Activated CD4-positive, alpha-beta T cell treated with anti-CD3 and anti-CD28 coated beads, Interleukin-2, amount 10 ng/mL, durations not matched to agents 24 days and 14 days (primary cell): ENCODE measurements at regions of chr14 and their contacts with region 1.

Region 1: GRCh38 chr14:91060351-91061055 is at the start of gene RPS6KA5:
- DNase-seq: peak; percentile 100
- H3K4me3 Mint-ChIP-seq: peak within 1 kb of the TSS; percentile 85
- H3K27ac Mint-ChIP-seq: peak within 1 kb of the TSS; percentile 76
- H3K4me1 Mint-ChIP-seq: peaks cover 51% of the 10 kb centered on the region
- H3K27me3 Mint-ChIP-seq: no peaks in the 10 kb centered on the region
- total RNA-seq, gene RPS6KA5: 13.5 and 13.8 TPM in 2 replicates

Region 2: DNA sequence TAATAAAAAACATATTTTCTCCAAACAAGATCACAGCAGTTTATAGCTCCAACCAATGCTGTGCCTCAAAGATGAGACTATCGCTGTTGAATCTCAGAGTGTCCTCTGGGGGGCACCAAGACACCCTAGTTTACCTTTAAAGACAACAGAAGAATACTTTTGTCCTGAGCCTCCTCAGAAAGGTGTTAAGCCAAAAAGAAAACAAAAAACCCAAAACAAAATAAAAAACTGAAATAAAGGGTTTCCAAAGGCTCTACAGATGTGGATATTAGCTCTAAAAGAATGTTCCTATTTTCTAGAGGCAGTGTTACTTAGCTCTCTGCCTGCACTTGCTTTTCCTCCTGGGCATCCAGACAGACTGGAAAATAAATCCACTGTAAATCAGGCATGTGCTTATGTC is 157.4 kb before region 1 on chr14:
- intact Hi-C with region 1: loop called (anchors 5 kb)
- DNase-seq: peak; percentile 89
- H3K4me3 Mint-ChIP-seq: no peak overlapping the region
- H3K27ac Mint-ChIP-seq: no peak overlapping the region
- H3K4me1 Mint-ChIP-seq: peaks cover 30% of the 10 kb centered on the region
- H3K27me3 Mint-ChIP-seq: no peaks in the 10 kb centered on the region

Region 3: DNA sequence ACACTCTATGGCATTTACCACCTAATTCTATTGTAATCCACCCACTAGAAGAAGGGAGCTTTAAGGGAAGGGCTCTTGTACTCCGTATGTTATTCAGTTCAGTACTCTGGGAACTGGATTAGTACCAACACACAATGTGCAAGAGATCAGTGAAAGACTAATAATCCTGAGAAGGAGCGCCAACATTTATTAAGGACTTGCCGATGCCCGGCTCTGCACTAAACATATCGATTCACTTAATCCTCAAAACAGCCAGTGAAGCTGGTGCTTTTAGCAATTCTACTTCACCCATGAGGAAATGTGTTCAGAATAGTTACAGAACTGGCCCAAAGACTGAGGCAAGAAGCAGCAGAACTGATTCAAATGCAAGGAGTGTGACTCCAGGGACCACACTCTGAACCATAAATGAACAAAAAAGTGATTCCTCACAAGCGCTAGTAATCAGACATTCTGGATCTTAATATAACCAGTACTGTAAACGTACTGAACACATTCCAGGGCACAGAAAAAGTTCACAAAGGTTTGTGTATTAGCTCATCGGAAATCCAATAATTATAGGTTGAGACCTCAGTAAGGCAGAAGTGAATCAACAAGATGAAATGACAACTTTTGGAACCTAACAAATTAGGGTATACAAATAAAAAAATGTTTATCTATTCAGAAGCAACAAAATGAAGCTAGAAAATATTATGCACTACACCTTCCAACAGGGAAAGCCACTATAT is 80.8 kb before region 1 on chr14:
- intact Hi-C with region 1: no loop called
- DNase-seq: no peak
- H3K4me3 Mint-ChIP-seq: no peak overlapping the region
- H3K27ac Mint-ChIP-seq: no peak overlapping the region
- H3K4me1 Mint-ChIP-seq: peaks cover 5% of the 10 kb centered on the region
- H3K27me3 Mint-ChIP-seq: no peaks in the 10 kb centered on the region

Region 4: GRCh38 chr14:91021991-91022621 is 38.4 kb before region 1 on chr14:
- intact Hi-C with region 1: loop called (anchors 1 kb)
- DNase-seq: peak; percentile 82
- H3K4me3 Mint-ChIP-seq: peak overlapping the region; percentile 83
- H3K27ac Mint-ChIP-seq: peak overlapping the region; percentile 93
- H3K4me1 Mint-ChIP-seq: peaks cover 41% of the 10 kb centered on the region
- H3K27me3 Mint-ChIP-seq: no peaks in the 10 kb centered on the region

Region 5: GRCh38 chr14:91078095-91078737 is 17.7 kb after region 1 on chr14:
- intact Hi-C with region 1: loop called (anchors 1 kb)
- DNase-seq: peak; percentile 91
- H3K4me3 Mint-ChIP-seq: peak overlapping the region; percentile 45
- H3K27ac Mint-ChIP-seq: peak overlapping the region; percentile 61
- H3K4me1 Mint-ChIP-seq: peaks cover 36% of the 10 kb centered on the region
- H3K27me3 Mint-ChIP-seq: no peaks in the 10 kb centered on the region

Region 6: GRCh38 chr14:91138511-91139359 is 78.2 kb after region 1 on chr14:
- intact Hi-C with region 1: loop called (anchors 2 kb)
- DNase-seq: peak; percentile 88
- H3K4me3 Mint-ChIP-seq: no peak overlapping the region
- H3K27ac Mint-ChIP-seq: peak overlapping the region; percentile 42
- H3K4me1 Mint-ChIP-seq: peaks cover 48% of the 10 kb centered on the region
- H3K27me3 Mint-ChIP-seq: no peaks in the 10 kb centered on the region

Region 7: DNA sequence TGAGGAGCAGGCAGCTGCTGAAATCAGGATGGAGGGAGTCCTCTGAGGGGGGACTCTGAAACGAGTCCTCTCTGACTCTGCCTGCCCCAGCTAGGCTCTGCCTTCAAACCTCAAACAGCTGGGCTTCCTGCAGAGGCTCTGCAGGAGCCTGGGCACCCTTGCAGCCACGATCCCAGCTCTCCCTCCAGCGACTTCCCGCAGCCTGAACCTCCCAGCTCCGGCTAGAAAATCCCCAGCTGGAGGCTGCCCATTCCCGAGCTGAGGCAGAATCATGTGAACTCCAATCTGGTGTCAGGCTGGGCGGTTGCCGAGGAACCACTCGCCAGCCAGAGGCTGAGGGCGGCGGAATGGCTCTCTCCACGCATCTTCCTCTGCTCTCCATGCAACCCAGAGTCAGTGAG is 184.0 kb after region 1 on chr14 and contains the start of gene GPR68:
- intact Hi-C with region 1: loop called (anchors 2 kb)
- DNase-seq: peak; percentile 84
- H3K4me3 Mint-ChIP-seq: peak within 1 kb of the TSS; percentile 84
- H3K27ac Mint-ChIP-seq: peak within 1 kb of the TSS; percentile 91
- H3K4me1 Mint-ChIP-seq: peaks cover 82% of the 10 kb centered on the region
- H3K27me3 Mint-ChIP-seq: no peaks in the 10 kb centered on the region
- total RNA-seq, gene GPR68: 4.6 and 4.9 TPM in 2 replicates

Region 8: DNA sequence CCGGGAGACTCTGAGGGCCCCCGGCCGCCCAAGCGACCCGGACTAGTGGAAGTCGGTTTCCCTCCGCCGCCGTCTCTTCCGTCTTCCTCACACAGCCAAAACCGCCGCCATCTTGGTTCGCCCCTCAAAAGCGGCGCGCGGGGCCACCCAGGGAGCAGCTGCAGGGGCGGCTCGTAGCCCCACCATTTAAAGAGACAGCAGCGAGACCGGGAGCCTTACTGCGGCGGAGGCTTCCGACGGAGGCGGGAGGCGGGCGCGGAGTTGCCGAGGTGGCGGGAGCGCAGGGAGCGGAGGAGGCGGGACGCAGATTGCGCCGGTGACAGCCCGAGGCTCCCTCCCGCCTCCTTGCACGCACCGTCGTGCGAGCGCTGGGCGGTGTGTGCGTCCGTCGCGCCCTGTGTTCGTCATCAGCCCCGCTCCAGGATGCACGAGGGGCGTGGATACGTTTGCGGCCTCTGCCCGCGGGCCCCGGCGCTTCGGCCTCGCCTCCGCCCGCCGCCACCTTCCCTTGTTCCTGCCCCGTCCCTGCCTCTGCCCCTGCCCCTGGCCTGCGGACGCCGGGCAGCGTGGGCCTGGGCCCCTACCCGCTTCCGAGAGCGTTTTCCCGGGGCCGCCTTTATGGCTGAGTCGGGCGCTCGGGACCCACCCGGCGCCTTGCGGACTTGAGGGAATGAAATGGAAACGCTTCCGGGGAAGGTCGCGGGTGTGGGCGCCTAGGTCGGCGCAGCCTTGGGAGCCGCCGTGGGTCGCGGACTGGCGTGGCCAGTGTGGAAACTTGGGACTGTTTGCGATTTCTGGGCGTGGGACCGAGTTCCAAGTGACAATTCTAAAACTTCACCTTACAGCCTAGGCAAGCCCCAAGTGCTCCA is 449.9 kb after region 1 on chr14 and contains the start of gene PPP4R3A:
- intact Hi-C with region 1: loop called (anchors 10 kb)
- DNase-seq: peak; percentile 97
- H3K4me3 Mint-ChIP-seq: peak within 1 kb of the TSS; percentile 97
- H3K27ac Mint-ChIP-seq: peak within 1 kb of the TSS; percentile 100
- H3K4me1 Mint-ChIP-seq: peaks cover 18% of the 10 kb centered on the region
- H3K27me3 Mint-ChIP-seq: peaks cover 3% of the 10 kb centered on the region
- total RNA-seq, gene PPP4R3A: 119 and 138 TPM in 2 replicates